ENCODE measurements at regions of chr3 and their contacts with region 1.

Region 1: DNA sequence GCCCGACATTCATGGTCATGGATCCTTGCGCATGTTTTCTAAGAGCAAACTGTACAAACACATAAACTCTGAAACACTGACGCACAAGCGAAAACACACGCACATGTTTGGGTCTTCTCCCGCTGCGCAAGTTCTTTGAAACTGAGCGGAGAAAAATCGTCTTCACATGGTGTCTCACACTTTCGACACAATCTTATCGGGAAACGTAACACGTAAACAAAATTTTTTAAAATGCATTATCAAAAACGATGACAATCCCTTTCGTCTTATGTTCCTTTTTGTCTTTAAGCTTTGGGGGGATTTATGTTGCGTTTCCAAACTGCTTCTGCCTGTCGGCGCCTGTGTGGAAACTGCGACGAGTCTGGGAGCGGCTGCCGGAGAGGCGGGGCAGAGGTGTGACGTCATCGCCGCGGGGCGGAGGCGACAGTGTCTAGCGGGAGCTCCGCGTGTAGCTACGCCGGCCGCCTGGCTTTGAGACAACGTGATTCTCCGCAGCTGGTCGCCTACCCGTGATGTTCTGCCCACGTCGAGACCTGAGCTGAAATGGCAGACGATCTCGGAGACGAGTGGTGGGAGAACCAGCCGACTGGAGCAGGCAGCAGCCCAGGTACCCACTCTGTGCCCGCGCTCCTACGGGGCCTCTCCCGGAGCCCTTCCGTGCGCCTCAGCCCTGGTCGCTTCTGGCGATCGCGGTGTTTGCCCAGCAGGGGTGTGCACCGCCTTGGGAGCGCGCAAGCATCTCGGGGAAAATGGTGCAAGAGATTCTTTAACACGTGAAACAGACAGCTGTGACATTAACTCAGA is at the start of gene CMSS1:
- DNase-seq: peak; percentile 92
- H3K4me3 Mint-ChIP-seq: peak within 1 kb of the TSS; percentile 88
- H3K27ac Mint-ChIP-seq: peak within 1 kb of the TSS; percentile 90
- H3K4me1 Mint-ChIP-seq: peaks cover 35% of the 10 kb centered on the region
- H3K27me3 Mint-ChIP-seq: no peaks in the 10 kb centered on the region
- total RNA-seq, gene CMSS1: 108 and 121 TPM in 2 replicates

Region 2: DNA sequence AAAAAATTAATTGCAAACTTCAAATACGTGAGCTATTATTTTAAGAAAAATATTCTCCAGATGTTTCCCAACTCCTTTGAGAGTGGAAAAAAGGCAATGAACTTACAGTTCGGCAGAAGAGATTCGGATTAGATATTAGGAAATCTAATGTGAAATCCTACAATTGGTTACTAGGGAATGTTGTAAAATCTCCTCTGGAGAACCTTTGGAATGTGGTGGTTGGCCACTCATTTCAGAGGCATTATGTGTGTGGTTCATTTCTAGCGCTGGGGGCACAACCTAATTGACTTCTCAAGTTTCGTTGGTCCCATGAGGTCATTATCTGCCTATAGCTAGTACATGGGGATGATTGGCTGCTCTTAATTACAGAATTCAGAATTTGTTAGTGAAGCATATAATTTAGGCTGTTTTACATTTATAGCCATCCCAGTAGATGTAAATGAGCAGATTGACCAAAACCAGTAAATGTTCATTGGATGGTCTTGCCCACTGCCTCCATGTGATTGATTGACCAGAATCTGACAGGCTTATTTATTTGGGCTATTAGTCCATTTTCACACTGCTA is 34.5 kb before region 1 on chr3:
- intact Hi-C with region 1: no loop called
- DNase-seq: no peak
- H3K4me3 Mint-ChIP-seq: no peak overlapping the region
- H3K27ac Mint-ChIP-seq: no peak overlapping the region
- H3K4me1 Mint-ChIP-seq: no peaks in the 10 kb centered on the region
- H3K27me3 Mint-ChIP-seq: peaks cover 28% of the 10 kb centered on the region

Region 3: DNA sequence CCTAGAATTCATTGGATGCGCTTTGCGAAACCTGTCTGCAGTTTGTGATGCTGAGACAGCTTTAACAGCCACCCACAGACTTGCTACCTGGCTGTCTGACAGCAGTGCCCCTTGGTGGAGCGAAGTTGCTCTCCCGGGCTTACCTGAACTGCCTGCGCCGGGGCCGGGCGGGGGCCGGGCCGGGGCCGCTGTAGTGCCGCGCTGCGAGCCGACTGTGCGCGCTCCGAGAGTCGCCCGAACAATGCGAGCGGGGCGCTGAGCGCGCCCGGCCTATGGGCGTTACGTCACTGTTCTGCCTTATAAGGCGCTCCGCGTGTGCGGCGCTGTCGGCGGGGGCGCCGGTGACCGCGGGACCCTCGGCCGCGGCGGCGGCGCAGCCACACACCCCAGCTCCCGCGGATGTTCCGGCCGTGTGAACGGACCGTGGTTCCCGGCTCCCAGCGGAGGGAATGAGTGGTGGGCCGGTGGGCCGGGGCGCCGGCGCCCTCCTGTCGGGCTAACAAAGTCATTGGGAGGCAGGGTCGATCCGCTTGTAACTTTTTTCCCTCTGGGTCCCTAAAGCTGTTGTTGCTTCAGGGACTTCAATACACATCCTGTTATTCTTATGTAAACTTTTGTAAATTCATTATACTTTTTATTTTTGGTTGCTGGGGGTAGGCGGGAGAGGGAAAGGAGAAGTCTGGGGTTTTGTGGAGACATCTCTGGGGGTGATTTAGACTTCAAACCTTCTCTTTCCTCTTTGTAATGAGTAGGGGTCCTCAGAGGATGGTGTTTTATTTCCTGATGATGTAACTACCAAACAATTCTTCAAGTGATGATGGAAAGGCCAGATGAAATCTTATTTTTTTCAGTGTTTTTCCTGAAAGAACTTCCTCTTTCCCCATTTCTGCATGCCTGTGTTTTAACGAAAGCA is 58.5 kb after region 1 on chr3:
- intact Hi-C with region 1: loop called (anchors 1 kb)
- DNase-seq: peak; percentile 66
- H3K4me3 Mint-ChIP-seq: peak overlapping the region; percentile 82
- H3K27ac Mint-ChIP-seq: no peak overlapping the region
- H3K4me1 Mint-ChIP-seq: peaks cover 53% of the 10 kb centered on the region
- H3K27me3 Mint-ChIP-seq: peaks cover 14% of the 10 kb centered on the region

Region 4: DNA sequence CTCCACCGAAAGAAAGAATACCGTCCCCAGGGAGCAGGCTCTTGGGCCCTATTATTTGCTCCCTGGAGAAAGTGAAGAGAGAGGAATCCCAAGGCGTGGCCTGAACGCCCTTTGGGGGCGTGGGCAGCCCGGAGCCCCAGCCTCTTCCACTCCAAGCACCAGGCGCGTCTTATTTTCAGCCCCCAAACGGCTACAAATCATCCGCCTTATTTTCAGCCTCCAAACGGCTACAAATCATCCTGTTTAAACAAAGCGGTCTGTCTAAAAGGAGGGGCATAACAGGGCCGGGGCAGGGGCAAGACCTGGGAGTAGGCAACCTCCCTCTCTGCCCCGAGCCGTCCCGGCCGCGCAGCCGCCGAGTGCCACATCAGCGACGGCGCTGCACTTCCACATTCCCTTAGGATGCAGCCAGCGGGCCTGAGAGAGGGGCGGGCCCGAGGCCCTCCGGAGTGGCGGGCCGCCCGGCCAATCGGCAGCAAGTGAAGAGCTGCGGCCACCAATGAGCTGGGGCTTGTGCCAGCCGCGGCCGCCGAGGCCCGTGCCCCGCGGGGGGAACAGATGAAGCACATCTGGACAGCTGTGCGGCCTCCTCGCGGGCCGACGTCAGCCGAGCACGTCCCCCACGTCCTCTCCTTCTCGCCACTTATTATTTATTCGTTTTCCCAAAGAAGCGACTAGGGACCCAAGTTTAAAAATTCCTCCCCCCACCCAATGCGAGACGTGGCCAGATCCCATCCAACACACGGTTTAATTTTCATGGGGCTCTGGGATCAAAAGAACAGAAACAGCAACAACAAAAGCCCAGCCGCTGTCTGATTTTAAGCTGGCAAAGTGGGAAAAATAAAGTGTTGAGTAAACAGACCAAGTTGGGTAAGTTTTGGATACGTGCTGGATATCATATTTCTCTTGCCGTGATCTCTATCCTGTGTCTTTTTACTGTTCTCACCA is 674.7 kb after region 1 on chr3 and contains the start of gene TMEM45A:
- intact Hi-C with region 1: loop called (anchors 5 kb)
- DNase-seq: peak; percentile 73
- H3K4me3 Mint-ChIP-seq: peak within 1 kb of the TSS; percentile 86
- H3K27ac Mint-ChIP-seq: no peak within 1 kb of the TSS
- H3K4me1 Mint-ChIP-seq: peaks cover 17% of the 10 kb centered on the region
- H3K27me3 Mint-ChIP-seq: peaks cover 18% of the 10 kb centered on the region
- total RNA-seq, gene TMEM45A: 0.13 and 0.34 TPM in 2 replicates

Region 5: GRCh38 chr3:101676765-101677435 is 1859.3 kb after region 1 on chr3 and contains the start of gene ZBTB11:
- intact Hi-C with region 1: loop called (anchors 5 kb)
- DNase-seq: peak; percentile 99
- H3K4me3 Mint-ChIP-seq: peak within 1 kb of the TSS; percentile 96
- H3K27ac Mint-ChIP-seq: peak within 1 kb of the TSS; percentile 97
- H3K4me1 Mint-ChIP-seq: peaks cover 56% of the 10 kb centered on the region
- H3K27me3 Mint-ChIP-seq: no peaks in the 10 kb centered on the region
- total RNA-seq, gene ZBTB11: 29.0 and 31.9 TPM in 2 replicates